ENCODE measurements at regions of chr5 and their contacts with region 1.

Region 1: GRCh38 chr5:12661617-12662370 is 757.5 kb upstream of the CTNND2 start:
- DNase-seq: peak; percentile 47 to 76
- H3K4me3 ChIP-seq: no peak overlapping the region
- H3K27ac ChIP-seq: no peak overlapping the region; the same call in 1 of the 2 replicates
- H3K4me1 ChIP-seq: peaks cover 2 to 16% (median 6%) of the 10 kb centered on the region in 4 experiments
- H3K27me3 ChIP-seq: no peaks in the 10 kb centered on the region
- CTCF ChIP-seq: peak in 1 of 3 experiments; percentile 2; a peak in 1 of 4 replicates
- EP300 ChIP-seq: no peak
- POLR2A ChIP-seq: peak; percentile 65 to 95
- RAD21 ChIP-seq: no peak; a peak in 1 of 4 replicates

Region 2: DNA sequence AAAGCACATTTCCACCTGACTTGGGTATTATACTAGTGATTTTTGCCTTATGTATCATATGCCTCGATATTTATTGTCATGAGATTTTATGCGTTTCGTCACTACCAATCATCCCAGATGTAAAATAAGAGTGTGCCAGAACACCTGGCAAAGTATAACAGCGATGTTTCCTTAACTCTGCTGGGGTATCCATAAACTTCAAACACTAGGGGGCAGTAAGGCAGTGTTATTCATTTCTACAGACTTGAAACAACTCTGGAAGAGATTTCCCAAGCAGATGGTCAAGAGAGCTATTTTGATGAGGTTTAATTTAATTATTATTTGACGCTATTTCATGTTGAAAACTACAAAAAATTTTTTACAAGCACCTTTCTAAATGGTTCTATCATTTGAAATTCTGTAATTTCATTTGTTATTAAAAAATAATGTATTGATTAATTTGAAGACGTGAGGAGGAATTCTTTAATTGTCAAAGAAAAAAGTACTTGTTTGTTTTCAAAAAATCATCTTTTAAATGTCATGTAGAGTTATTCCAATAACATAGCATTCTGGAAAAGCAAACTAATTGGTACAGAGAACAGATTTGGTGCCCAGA is 369.1 kb before region 1 on chr5:
- CTCF ChIA-PET with region 1: interaction called, 3 read pairs
- POLR2A ChIA-PET with region 1: interaction called, 14 read pairs
- DNase-seq: peak in 1 of 2 experiments; percentile 1
- H3K4me3 ChIP-seq: no peak overlapping the region
- H3K27ac ChIP-seq: no peak overlapping the region
- H3K4me1 ChIP-seq: no peaks in the 10 kb centered on the region
- H3K27me3 ChIP-seq: no peaks in the 10 kb centered on the region
- CTCF ChIP-seq: peak in 2 of 3 experiments; percentile 52; a peak in 3 of 4 replicates
- EP300 ChIP-seq: no peak
- POLR2A ChIP-seq: no peak
- RAD21 ChIP-seq: peak; percentile 82 to 85

Region 3: DNA sequence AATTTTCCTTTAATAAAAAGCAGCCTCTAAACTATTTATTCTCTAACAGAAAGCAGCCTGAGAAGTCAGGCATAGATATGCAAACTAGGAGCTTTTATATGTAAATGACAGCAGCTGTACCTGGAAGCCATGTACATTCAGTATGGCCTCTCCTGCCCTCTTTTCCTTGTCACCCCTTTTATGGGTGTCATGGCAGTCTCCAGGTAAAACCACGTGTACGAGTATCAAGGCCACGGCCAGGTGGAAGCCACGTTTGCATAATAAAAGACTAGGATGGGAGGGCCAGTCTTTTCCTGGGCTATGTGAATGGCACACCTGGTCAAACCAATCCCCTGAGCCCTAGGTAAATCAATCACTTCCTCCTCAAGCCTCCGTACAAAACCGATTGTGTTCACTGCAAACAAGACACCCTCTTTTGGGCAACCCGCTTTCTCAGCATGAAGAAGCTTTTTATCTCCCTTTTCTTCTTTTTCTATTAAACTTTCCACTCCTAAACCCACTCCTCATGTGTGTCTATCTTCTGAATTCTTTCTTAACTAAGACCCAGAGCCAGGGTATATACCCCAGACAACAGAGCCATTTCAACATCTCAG is 338.1 kb before region 1 on chr5:
- CTCF ChIA-PET with region 1: no interaction called
- POLR2A ChIA-PET with region 1: interaction called, 23 read pairs
- DNase-seq: peak; percentile 68 to 95
- H3K4me3 ChIP-seq: peak overlapping the region in 1 of 4 experiments; percentile 40; a peak in 2 of 8 replicates
- H3K27ac ChIP-seq: peak overlapping the region; percentile 55
- H3K4me1 ChIP-seq: peaks cover 0 to 6% (median 4%) of the 10 kb centered on the region in 4 experiments; a peak in 3 of 7 replicates
- H3K27me3 ChIP-seq: no peaks in the 10 kb centered on the region
- CTCF ChIP-seq: no peak
- EP300 ChIP-seq: peak in 1 of 2 experiments; percentile 80; a peak in 1 of 3 replicates
- POLR2A ChIP-seq: peak; percentile 47 to 82
- RAD21 ChIP-seq: peak in 1 of 2 experiments; percentile 11; a peak in 1 of 4 replicates

Region 4: GRCh38 chr5:12623408-12623807 is 38.4 kb before region 1 on chr5:
- CTCF ChIA-PET with region 1: interaction called, 4 read pairs
- POLR2A ChIA-PET with region 1: interaction called, 12 read pairs
- DNase-seq: peak in 1 of 2 experiments; percentile 68
- H3K4me3 ChIP-seq: peak overlapping the region in 1 of 4 experiments; percentile 76; a peak in 4 of 8 replicates
- H3K27ac ChIP-seq: peak overlapping the region; percentile 61; the same call in 1 of the 2 replicates
- H3K4me1 ChIP-seq: peaks cover 2 to 27% (median 16%) of the 10 kb centered on the region in 4 experiments
- H3K27me3 ChIP-seq: no peaks in the 10 kb centered on the region
- CTCF ChIP-seq: no peak
- EP300 ChIP-seq: peak in 1 of 2 experiments; percentile 68; a peak in 1 of 3 replicates
- POLR2A ChIP-seq: no peak
- RAD21 ChIP-seq: no peak; a peak in 1 of 4 replicates

Region 5: DNA sequence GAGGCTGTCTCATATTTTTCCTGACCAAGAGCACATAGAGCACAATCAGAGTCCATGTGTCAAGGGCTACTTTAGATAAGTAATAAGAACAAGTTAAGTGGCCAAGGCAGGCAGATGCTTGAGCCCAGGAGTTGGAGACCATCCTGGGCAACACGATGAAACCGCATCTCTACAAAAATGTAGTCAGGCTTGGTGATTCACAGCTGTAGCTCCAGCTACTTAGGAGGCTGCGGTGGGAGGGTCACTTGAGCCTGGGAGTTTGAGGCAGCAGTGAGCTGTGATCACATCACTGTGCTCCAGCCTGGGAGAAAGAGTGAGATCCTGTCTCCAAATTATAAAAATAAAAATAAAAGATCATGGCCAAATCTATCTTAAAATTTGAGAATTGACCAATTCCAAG is 10.3 kb after region 1 on chr5:
- CTCF ChIA-PET with region 1: interaction called, 8 read pairs
- POLR2A ChIA-PET with region 1: interaction called, 37 read pairs
- DNase-seq: no peak
- H3K4me3 ChIP-seq: no peak overlapping the region
- H3K27ac ChIP-seq: no peak overlapping the region
- H3K4me1 ChIP-seq: peaks cover 4 to 18% (median 14%) of the 10 kb centered on the region in 4 experiments; a peak in 4 of 7 replicates
- H3K27me3 ChIP-seq: no peaks in the 10 kb centered on the region
- CTCF ChIP-seq: no peak
- EP300 ChIP-seq: no peak
- POLR2A ChIP-seq: no peak
- RAD21 ChIP-seq: no peak

Measured in H1 (cell line).